ENCODE measurements at regions of chr11 and their contacts with region 1.

Region 1: DNA sequence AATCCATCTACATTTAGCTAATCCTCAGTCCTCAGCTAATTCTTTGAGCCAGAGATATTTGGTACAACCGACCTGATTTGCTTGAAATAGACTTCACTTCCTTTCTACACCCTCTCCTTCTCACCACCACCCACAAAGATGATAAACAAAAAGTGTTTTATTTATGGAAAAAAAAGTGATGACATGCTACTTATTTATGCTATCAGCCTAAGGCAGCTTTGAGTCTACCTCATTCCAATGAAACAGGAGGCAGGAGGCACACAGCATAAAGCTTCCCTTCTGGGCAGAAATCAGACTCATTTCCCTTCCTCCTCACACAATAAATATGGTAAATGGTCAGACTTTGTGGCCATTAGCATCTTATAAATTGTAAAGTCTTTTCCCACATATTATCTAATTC is 325.7 kb downstream of the SOX6 start:
- DNase-seq: peak in 2 of 4 experiments; percentile 9 to 29
- ATAC-seq: peak; percentile 62
- H3K4me3 ChIP-seq: no peak overlapping the region
- H3K27ac ChIP-seq: no peak overlapping the region
- H3K4me1 ChIP-seq: peaks cover 0 to 8% of the 10 kb centered on the region in 2 experiments; a peak in 2 of 5 replicates
- H3K27me3 ChIP-seq: no peaks in the 10 kb centered on the region
- CTCF ChIP-seq: no peak
- EP300 ChIP-seq: no peak
- POLR2A ChIP-seq: no peak
- RAD21 ChIP-seq: no peak

Region 2: GRCh38 chr11:16043617-16044016 is 13.0 kb after region 1 on chr11:
- CTCF ChIA-PET with region 1: no interaction called
- POLR2A ChIA-PET with region 1: interaction called, 12 read pairs
- in situ Hi-C with region 1: no loop called
- intact Hi-C with region 1: no loop called
- DNase-seq: no peak
- ATAC-seq: no peak
- H3K4me3 ChIP-seq: no peak overlapping the region
- H3K27ac ChIP-seq: no peak overlapping the region
- H3K4me1 ChIP-seq: peaks cover 0 to 15% of the 10 kb centered on the region in 2 experiments; a peak in 2 of 5 replicates
- H3K27me3 ChIP-seq: no peaks in the 10 kb centered on the region
- CTCF ChIP-seq: no peak
- EP300 ChIP-seq: no peak
- POLR2A ChIP-seq: no peak
- RAD21 ChIP-seq: no peak